ENCODE measurements at regions of chr5 and their contacts with region 1.

Region 1: DNA sequence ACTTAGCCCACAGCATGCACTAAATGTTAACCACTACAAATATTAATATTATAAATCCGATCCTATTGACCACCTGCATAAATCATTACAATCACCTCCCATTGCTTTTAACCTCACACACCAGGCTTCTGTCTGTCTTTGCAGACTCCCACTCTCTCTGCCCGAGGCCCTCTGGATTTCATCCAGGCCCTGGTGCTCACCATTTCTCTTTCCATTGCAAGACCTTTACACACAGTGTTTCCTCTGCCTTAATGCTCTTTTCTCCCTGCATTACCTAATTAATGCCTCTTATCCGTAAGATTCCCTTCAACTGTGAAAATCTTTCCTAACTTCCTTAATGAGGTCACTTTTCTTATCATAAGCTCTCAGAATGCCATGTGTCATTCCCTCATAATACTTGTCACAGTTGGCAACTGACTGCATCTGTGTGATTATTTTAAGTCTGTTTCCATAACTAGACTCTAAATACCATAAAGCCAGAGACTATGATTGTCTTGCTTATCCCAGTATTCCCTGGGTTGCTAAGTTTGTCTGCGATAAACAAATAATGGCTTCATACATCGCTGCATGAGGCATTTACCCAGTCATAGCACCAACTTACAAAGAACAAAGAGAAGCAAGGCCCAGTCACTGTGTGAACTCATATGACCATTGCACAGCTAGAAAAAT is 155.1 kb downstream of the CCDC192 start:
- DNase-seq: peak; percentile 89
- H3K4me3 ChIP-seq: no peak overlapping the region
- H3K27ac ChIP-seq: peak overlapping the region; percentile 84
- H3K4me1 ChIP-seq: peaks cover 27% of the 10 kb centered on the region
- H3K27me3 ChIP-seq: no peaks in the 10 kb centered on the region
- CTCF ChIP-seq: no peak
- POLR2A ChIP-seq: no peak

Region 2: GRCh38 chr5:127801751-127802476 is 56.3 kb before region 1 on chr5:
- CTCF ChIA-PET with region 1: interaction called, 3 read pairs
- POLR2A ChIA-PET with region 1: no interaction called
- dilution Hi-C with region 1: no loop called
- intact Hi-C with region 1: loop called (anchors 1 kb)
- DNase-seq: peak; percentile 71
- H3K4me3 ChIP-seq: no peak overlapping the region
- H3K27ac ChIP-seq: peak overlapping the region; percentile 75
- H3K4me1 ChIP-seq: peaks cover 17% of the 10 kb centered on the region
- H3K27me3 ChIP-seq: no peaks in the 10 kb centered on the region
- CTCF ChIP-seq: no peak
- POLR2A ChIP-seq: no peak